CD14-positive monocyte (primary cell): ENCODE measurements at regions of chr2 and their contacts with region 1.

Region 1: GRCh38 chr2:48946449-48947048 is 191.0 kb upstream of the LHCGR start:
- DNase-seq: peak; percentile 4 to 37 (median 30)
- H3K4me3 ChIP-seq: no peak overlapping the region
- H3K4me3 Mint-ChIP-seq: no peak overlapping the region
- H3K27ac ChIP-seq: no peak overlapping the region
- H3K27ac Mint-ChIP-seq: no peak overlapping the region
- H3K4me1 ChIP-seq: no peaks in the 10 kb centered on the region
- H3K4me1 Mint-ChIP-seq: no peaks in the 10 kb centered on the region
- H3K27me3 ChIP-seq: peaks cover 0 to 2% of the 10 kb centered on the region in 2 donors
- H3K27me3 Mint-ChIP-seq: peaks cover 0 to 5% (median 3%) of the 10 kb centered on the region in 3 donors
- CTCF ChIP-seq: peak; percentile 92

Region 2: DNA sequence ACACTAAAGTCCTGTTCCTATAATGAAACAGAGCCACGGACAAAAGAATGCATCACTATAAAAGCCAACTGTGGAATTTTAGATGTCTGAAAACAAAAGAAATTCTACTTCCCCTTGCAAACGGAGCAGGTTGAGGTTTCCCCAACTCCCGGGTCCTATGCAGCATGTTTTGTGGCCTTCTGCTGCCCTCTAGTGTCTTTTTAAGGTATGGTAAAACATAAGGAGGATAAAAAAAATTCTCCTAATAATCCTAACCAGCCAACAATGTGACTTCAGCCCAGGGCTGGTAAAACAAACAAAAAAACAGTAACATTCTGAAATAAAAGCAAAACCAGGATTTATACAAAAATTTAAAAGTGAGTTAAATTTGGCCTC is 1545.9 kb after region 1 on chr2:
- intact Hi-C with region 1: loop called in 1 of 2 experiments (anchors 5 kb)
- DNase-seq: peak; percentile 27 to 56 (median 28)
- H3K4me3 ChIP-seq: no peak overlapping the region
- H3K4me3 Mint-ChIP-seq: no peak overlapping the region
- H3K27ac ChIP-seq: no peak overlapping the region
- H3K27ac Mint-ChIP-seq: no peak overlapping the region
- H3K4me1 ChIP-seq: no peaks in the 10 kb centered on the region
- H3K4me1 Mint-ChIP-seq: no peaks in the 10 kb centered on the region
- H3K27me3 ChIP-seq: no peaks in the 10 kb centered on the region
- H3K27me3 Mint-ChIP-seq: peaks cover 0 to 5% (median 0%) of the 10 kb centered on the region in 3 donors
- CTCF ChIP-seq: peak; percentile 53